ENCODE measurements at regions of chr6 and their contacts with region 1.

Region 1: GRCh38 chr6:149823013-149823412 is 41.1 kb downstream of the LRP11 start:
- DNase-seq: no peak
- H3K4me3 Mint-ChIP-seq: no peak overlapping the region
- H3K27ac Mint-ChIP-seq: no peak overlapping the region
- H3K4me1 Mint-ChIP-seq: no peaks in the 10 kb centered on the region
- H3K27me3 Mint-ChIP-seq: no peaks in the 10 kb centered on the region

Region 2: DNA sequence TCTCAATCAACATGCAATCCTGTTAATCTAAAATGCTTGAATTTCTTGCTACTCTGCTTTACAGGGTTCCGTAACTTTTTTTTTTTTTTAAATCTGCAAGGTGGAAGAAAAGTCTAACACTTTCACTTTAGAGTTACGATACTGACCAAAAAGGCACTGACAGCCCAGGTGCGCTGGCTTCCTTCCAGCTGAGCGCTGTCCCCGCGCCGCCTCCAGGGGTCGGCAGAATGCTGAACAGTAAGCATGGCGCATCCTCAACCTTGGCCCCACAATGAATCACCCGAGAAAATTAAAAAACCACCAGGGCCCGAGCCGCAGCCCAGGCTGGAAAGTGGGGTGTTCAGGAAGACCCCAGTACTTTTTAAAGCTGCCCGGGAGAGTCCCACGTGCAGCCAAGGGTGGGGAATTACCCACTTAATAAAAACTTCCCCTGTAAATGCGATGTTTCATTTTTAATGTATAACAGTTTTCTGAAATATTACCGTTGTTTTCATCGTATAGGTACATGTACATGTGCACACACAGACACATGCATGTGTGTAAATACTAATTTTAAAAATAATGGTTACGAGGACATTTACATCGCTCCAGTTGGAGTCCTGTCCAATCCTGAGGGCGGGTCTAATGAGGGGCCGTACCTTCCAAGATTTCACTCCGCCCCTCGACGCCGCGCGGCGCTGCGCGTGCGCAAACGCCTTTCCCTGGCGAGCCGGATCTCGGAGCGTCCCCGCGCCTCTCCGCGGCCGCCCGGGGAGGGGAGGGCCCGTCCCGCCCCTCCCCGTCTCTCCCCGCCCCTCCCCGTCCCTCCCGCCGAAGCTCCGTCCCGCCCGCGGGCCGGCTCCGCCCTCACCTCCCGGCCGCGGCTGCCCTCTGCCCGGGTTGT is 257.2 kb before region 1 on chr6 and contains the start of gene GINM1:
- CTCF ChIA-PET with region 1: no interaction called
- intact Hi-C with region 1: loop called (anchors 1 kb)
- DNase-seq: peak; percentile 97
- H3K4me3 Mint-ChIP-seq: peak within 1 kb of the TSS; percentile 92
- H3K27ac Mint-ChIP-seq: peak within 1 kb of the TSS; percentile 89
- H3K4me1 Mint-ChIP-seq: peaks cover 26% of the 10 kb centered on the region
- H3K27me3 Mint-ChIP-seq: no peaks in the 10 kb centered on the region
- total RNA-seq, gene GINM1: 17.6 to 18.4 TPM

Region 3: DNA sequence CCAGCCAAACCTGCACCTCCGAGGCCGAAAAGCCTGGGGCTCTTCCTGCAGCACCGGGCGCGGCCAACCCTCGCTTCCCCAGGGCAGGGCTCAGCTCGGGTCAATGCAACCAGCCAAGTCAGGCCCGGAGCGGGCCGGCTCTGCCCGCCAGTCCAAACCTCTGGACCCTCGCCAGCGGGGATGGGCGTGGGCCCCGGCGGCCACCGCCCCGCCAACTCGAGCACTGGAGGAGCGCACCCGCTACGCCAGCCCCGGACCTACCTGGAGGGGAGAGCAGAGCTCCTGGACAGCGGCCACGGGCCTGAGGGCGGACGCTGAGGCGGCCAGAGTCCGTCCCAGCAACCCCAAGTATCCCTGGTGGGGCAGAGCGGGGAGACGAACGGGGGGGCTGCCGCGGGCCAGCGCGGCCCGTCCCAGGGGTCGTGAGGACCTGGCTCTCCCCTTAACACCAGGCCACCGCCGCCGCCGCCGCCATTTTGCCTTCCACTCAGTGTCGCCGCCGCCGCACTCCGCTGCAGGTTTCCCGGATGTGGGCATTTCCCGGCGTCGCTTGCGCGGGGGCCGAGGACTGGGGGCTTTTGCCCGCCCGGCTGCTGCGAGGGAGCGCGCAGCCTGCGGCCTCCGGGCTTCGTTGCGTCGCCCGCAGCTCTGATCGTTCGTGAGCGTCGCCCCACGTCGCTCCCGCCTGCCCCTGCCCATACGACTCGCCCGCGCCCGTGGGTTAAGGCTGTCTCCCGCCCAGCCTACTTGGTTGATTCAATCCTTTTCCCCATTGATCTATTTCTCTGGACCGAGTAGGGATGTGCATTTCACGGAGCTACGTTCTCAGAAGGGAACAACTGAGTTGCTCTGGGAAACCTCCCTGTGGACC is 105.2 kb before region 1 on chr6 and contains the start of gene LATS1:
- CTCF ChIA-PET with region 1: no interaction called
- intact Hi-C with region 1: loop called (anchors 5 kb)
- DNase-seq: peak; percentile 95
- H3K4me3 Mint-ChIP-seq: peak within 1 kb of the TSS; percentile 84
- H3K27ac Mint-ChIP-seq: peak within 1 kb of the TSS; percentile 94
- H3K4me1 Mint-ChIP-seq: peaks cover 25% of the 10 kb centered on the region
- H3K27me3 Mint-ChIP-seq: no peaks in the 10 kb centered on the region
- total RNA-seq, gene LATS1: 18.1 to 19.6 TPM

Region 4: GRCh38 chr6:149834513-149835481 is 11.8 kb after region 1 on chr6:
- CTCF ChIA-PET with region 1: interaction called, 17 read pairs
- intact Hi-C with region 1: no loop called
- DNase-seq: peak; percentile 87
- H3K4me3 Mint-ChIP-seq: no peak overlapping the region
- H3K27ac Mint-ChIP-seq: no peak overlapping the region
- H3K4me1 Mint-ChIP-seq: peaks cover 2% of the 10 kb centered on the region
- H3K27me3 Mint-ChIP-seq: no peaks in the 10 kb centered on the region

Region 5: GRCh38 chr6:149840345-149841075 is 17.5 kb after region 1 on chr6:
- CTCF ChIA-PET with region 1: interaction called, 17 read pairs
- intact Hi-C with region 1: no loop called
- DNase-seq: peak; percentile 82
- H3K4me3 Mint-ChIP-seq: no peak overlapping the region
- H3K27ac Mint-ChIP-seq: no peak overlapping the region
- H3K4me1 Mint-ChIP-seq: no peaks in the 10 kb centered on the region
- H3K27me3 Mint-ChIP-seq: no peaks in the 10 kb centered on the region